Activated B cell treated with CpG ODN at 0.5 μM for 24 hours (primary cell): ENCODE measurements at regions of chr3 and their contacts with region 1.

Region 1: GRCh38 chr3:1191026-1191425 is 98.2 kb downstream of the CNTN6 start:
- DNase-seq: no peak
- ATAC-seq: no peak
- H3K4me3 Mint-ChIP-seq: no peak overlapping the region
- H3K27ac Mint-ChIP-seq: no peak overlapping the region
- H3K4me1 Mint-ChIP-seq: no peaks in the 10 kb centered on the region
- H3K27me3 Mint-ChIP-seq: no peaks in the 10 kb centered on the region
- CTCF ChIP-seq: no peak

Region 2: GRCh38 chr3:184983-185382 is 1006.0 kb before region 1 on chr3:
- CTCF ChIA-PET with region 1: no interaction called
- POLR2A ChIA-PET with region 1: no interaction called
- intact Hi-C with region 1: no loop called
- DNase-seq: no peak
- ATAC-seq: no peak
- H3K4me3 Mint-ChIP-seq: no peak overlapping the region
- H3K27ac Mint-ChIP-seq: no peak overlapping the region
- H3K4me1 Mint-ChIP-seq: peaks cover 2% of the 10 kb centered on the region
- H3K27me3 Mint-ChIP-seq: peaks cover 1% of the 10 kb centered on the region
- CTCF ChIP-seq: no peak

Region 3: GRCh38 chr3:1164101-1164500 is 26.9 kb before region 1 on chr3:
- CTCF ChIA-PET with region 1: no interaction called
- POLR2A ChIA-PET with region 1: no interaction called
- intact Hi-C with region 1: loop called (anchors 1 kb)
- DNase-seq: no peak
- ATAC-seq: no peak
- H3K4me3 Mint-ChIP-seq: no peak overlapping the region
- H3K27ac Mint-ChIP-seq: no peak overlapping the region
- H3K4me1 Mint-ChIP-seq: no peaks in the 10 kb centered on the region
- H3K27me3 Mint-ChIP-seq: no peaks in the 10 kb centered on the region
- CTCF ChIP-seq: no peak